ENCODE measurements at regions of chr17 and their contacts with region 1.

Region 1: DNA sequence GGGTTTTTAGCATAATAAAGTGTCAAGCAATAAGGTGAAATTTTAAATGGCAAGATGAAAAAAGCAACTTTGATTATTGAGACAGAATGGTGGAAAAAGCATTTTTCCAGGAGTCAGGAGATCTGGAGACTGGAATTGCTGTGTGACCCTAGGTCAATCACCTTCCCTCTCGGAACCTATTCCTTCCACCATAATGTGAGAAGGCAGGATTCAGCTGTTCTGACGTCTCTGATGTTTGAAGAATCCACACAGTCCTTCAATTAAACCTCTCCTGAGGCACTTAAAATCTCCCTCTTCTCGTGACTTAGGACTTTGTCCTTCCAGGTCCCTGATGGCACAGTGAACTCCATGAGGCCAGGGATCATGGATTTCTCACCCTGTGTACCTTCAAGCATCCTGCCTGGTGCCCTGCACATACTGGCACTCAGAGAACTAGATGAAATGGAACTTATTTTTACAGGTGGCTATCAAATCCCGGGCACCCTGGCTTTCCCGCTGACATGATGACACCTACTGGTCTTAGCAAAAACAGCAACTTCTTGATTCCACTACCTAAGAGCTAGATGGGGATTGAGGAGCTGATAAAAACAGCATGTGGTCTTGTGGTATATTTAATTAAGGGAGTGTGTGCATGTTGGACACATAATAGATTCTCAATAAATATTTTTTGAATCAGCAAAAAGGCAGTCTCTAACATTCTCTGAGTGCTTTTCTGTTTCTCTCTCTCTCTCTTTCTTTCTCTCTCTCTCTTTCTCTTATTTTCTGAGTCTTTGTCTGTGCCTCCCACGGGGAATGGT is 2.3 kb upstream of the CCDC182 start:
- DNase-seq: peak; percentile 89
- H3K4me3 ChIP-seq: no peak overlapping the region
- H3K27ac ChIP-seq: peak overlapping the region in 1 of 2 experiments; percentile 85; a peak in 2 of 4 replicates
- H3K4me1 ChIP-seq: peaks cover 0 to 40% of the 10 kb centered on the region in 2 experiments; a peak in 2 of 4 replicates
- H3K27me3 ChIP-seq: peaks cover 18% of the 10 kb centered on the region; the same call in 1 of the 2 replicates
- CTCF ChIP-seq: peak; percentile 99
- EP300 ChIP-seq: peak in 1 of 2 experiments; percentile 64; a peak in 1 of 4 replicates
- RAD21 ChIP-seq: peak; percentile 100

Region 2: DNA sequence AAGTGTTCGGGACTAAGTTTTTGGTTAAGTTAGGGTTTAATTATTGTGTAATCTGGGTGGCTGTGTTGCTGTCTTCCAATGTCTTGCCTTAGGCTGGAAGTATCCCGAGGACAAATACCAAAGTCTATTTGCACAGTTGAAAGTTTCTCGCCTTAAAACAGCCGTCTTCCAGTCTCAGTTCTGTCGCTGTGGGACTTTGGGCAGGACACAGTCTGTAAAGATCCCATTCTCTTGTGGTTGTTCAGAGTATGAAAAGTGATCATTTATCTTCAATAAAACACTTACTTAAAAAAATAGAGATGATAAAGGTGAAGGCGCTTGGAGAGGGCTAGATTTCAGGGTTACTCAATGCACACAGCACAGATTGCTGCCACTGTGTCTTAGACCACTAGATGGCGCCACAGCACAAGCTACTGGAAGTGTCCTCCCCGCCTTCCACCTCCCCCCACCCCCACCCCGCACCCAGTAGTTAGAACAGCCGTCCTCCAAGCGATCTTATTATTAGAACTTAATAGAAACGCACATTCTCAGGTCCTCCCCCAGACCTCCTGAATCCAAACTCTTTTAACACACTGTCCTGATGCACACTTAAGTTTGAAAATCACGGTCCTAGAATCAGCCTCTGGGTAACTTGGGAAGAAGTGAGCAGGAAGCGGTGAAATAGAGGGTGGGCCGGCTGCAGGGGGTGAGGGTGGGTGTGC is 616.5 kb before region 1 on chr17:
- CTCF ChIA-PET with region 1: interaction called, 11 read pairs
- POLR2A ChIA-PET with region 1: no interaction called
- DNase-seq: peak; percentile 98
- H3K4me3 ChIP-seq: peak overlapping the region; percentile 28 to 46; a peak in 2 of 4 replicates
- H3K27ac ChIP-seq: peak overlapping the region in 1 of 2 experiments; percentile 50; a peak in 1 of 4 replicates
- H3K4me1 ChIP-seq: peaks cover 0 to 12% of the 10 kb centered on the region in 2 experiments; a peak in 1 of 4 replicates
- H3K27me3 ChIP-seq: no peaks in the 10 kb centered on the region
- CTCF ChIP-seq: peak; percentile 90
- EP300 ChIP-seq: 0 out of 4 replicates have a peak, but pooled peaks of 1 of the 2 experiments have one; percentile 28
- RAD21 ChIP-seq: peak; percentile 92

Region 3: DNA sequence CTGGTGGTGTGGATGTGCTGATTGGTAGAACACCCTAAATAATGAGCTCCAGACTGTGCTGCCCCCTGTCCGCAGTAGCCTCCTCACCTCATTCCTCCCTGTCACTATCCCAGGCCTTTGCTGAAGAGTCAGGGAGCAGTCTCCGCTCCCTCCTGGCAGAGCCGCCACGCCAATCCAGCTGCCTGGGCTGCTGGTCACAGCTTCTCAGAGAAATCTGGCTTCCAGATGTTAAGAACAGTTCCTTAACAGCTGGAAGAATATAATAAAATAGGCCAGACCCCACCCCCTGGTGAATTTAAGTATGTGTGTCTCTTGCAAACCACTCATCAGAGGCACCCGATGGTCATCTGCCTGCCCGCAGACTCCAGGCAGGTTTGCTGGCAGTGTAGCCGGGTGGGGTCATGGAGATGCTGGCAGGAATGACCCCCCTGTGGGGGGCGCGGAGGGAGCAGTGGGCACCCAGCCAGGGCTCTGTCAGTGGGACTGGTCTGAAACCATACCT is 163.3 kb before region 1 on chr17:
- CTCF ChIA-PET with region 1: interaction called, 12 read pairs
- POLR2A ChIA-PET with region 1: interaction called, 16 read pairs
- DNase-seq: peak; percentile 83
- H3K4me3 ChIP-seq: no peak overlapping the region
- H3K27ac ChIP-seq: peak overlapping the region in 1 of 2 experiments; percentile 100; a peak in 2 of 4 replicates
- H3K4me1 ChIP-seq: peaks cover 13 to 89% of the 10 kb centered on the region in 2 experiments; a peak in 3 of 4 replicates
- H3K27me3 ChIP-seq: no peaks in the 10 kb centered on the region
- CTCF ChIP-seq: no peak
- EP300 ChIP-seq: peak in 1 of 2 experiments; percentile 86; a peak in 1 of 4 replicates
- RAD21 ChIP-seq: peak; percentile 47; the same call in 1 of the 2 replicates

Region 4: DNA sequence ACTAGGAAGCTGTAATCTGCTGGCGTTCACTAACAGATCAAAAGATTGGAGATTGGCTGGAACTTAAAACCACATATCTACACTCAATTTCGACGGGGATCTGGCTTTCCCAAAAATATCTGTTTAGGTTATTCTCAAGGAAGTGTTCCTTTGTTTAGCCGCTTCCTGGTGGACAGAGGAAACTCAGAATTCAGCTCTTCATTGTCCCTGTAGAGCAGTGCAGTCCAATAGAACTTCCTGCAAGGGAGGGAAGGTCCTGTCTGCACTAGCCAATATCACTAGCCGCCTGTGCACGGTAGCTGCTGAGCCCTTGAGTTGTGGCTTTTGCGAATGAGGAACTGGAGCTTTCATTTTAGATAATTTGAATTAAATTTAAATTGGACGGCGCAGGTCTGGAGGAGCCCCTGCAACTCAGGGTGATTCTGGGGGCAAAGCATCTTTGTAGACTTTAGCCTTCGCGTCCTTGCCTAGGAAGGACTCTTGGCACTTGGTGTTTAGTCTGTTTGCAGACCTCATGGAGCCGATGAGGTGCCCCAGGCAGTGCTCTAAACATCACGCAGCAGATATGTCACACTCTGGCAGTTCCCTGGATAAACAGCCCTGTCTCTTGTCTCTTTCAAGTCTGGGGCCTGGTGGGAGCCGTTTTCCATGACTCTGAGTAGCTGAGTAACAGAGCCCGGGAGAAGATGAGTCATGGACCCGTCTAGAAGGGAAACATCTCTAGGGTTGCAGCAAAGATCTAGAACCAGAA is 124.6 kb before region 1 on chr17:
- CTCF ChIA-PET with region 1: interaction called, 14 read pairs
- POLR2A ChIA-PET with region 1: no interaction called
- DNase-seq: peak; percentile 82
- H3K4me3 ChIP-seq: no peak overlapping the region
- H3K27ac ChIP-seq: peak overlapping the region; percentile 87 to 100
- H3K4me1 ChIP-seq: peaks cover 53 to 84% of the 10 kb centered on the region in 2 experiments
- H3K27me3 ChIP-seq: no peaks in the 10 kb centered on the region
- CTCF ChIP-seq: no peak
- EP300 ChIP-seq: peak; percentile 71 to 97; a peak in 3 of 4 replicates
- RAD21 ChIP-seq: peak; percentile 46

Region 5: GRCh38 chr17:57638284-57638683 is 109.1 kb before region 1 on chr17:
- CTCF ChIA-PET with region 1: no interaction called
- POLR2A ChIA-PET with region 1: no interaction called
- DNase-seq: no peak
- H3K4me3 ChIP-seq: no peak overlapping the region
- H3K27ac ChIP-seq: no peak overlapping the region; a peak in 1 of 4 replicates
- H3K4me1 ChIP-seq: peaks cover 0 to 50% of the 10 kb centered on the region in 2 experiments; a peak in 1 of 4 replicates
- H3K27me3 ChIP-seq: no peaks in the 10 kb centered on the region
- CTCF ChIP-seq: no peak
- EP300 ChIP-seq: no peak
- RAD21 ChIP-seq: no peak

Region 6: DNA sequence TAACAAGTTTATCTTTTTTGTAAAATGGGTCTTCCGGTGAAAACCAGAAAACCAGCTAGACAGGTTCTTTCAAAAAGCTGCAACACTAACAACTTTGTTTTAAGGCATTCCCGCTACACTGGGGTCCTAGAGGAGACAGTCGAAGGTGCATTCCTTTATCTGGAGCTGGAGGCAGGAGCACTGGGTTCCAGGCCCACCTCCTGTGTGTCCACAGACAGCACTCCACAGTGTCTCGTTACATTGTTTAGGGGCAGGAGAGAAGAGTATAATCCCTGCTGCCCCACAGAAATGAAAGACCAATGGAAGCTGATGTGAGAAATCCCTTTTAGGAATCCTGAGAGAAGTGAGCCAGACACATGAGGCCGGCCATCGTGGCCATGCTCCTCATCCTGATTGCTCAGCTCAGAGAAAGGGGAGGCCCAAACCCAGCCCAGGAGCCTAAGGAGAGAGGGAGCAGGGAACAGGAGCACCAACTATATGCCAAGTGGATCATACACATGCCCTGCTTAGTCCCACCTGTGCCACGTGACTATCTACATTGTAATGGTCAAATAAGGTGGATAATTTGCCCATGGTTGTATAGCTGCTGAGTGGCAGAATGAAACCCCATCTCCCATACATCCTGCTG is 61.8 kb before region 1 on chr17:
- CTCF ChIA-PET with region 1: interaction called, 17 read pairs
- POLR2A ChIA-PET with region 1: no interaction called
- DNase-seq: no peak
- H3K4me3 ChIP-seq: no peak overlapping the region
- H3K27ac ChIP-seq: peak overlapping the region in 1 of 2 experiments; percentile 97; a peak in 2 of 4 replicates
- H3K4me1 ChIP-seq: peaks cover 0 to 32% of the 10 kb centered on the region in 2 experiments; a peak in 2 of 4 replicates
- H3K27me3 ChIP-seq: no peaks in the 10 kb centered on the region
- CTCF ChIP-seq: no peak
- EP300 ChIP-seq: no peak
- RAD21 ChIP-seq: no peak

Region 7: GRCh38 chr17:57714665-57715180 is 32.7 kb before region 1 on chr17:
- CTCF ChIA-PET with region 1: interaction called, 15 read pairs
- POLR2A ChIA-PET with region 1: no interaction called
- DNase-seq: peak; percentile 41
- H3K4me3 ChIP-seq: no peak overlapping the region
- H3K27ac ChIP-seq: no peak overlapping the region
- H3K4me1 ChIP-seq: peaks cover 0 to 14% of the 10 kb centered on the region in 2 experiments; a peak in 1 of 4 replicates
- H3K27me3 ChIP-seq: peaks cover 33% of the 10 kb centered on the region; the same call in 1 of the 2 replicates
- CTCF ChIP-seq: no peak
- EP300 ChIP-seq: no peak
- RAD21 ChIP-seq: no peak

Region 8: DNA sequence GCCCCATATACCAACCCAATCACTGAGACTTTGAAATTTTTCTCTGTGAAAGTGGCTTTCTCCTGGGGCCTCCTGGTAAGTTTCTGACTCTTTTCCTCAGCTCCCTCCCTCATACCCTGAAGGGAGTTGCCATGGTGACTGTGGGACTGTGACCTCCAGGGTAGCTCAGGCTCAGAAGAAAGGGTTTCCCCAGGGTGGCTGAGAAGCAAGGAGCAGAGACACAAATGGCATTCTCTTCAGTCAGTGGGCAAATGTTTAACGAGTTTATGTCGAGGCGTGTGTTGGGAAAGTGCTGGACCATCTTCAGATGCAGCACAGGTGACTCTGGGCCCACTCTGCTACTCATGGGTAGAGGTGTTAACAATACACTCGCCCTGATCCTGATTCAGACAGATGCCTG is 55.6 kb after region 1 on chr17:
- CTCF ChIA-PET with region 1: no interaction called
- POLR2A ChIA-PET with region 1: no interaction called
- DNase-seq: no peak
- H3K4me3 ChIP-seq: no peak overlapping the region
- H3K27ac ChIP-seq: no peak overlapping the region
- H3K4me1 ChIP-seq: peaks cover 0 to 4% of the 10 kb centered on the region in 2 experiments; a peak in 1 of 4 replicates
- H3K27me3 ChIP-seq: no peaks in the 10 kb centered on the region
- CTCF ChIP-seq: no peak
- EP300 ChIP-seq: no peak
- RAD21 ChIP-seq: no peak

Measured in SK-N-SH (cell line).